A549 (cell line): ENCODE measurements at regions of chr7 and their contacts with region 1.

Region 1: DNA sequence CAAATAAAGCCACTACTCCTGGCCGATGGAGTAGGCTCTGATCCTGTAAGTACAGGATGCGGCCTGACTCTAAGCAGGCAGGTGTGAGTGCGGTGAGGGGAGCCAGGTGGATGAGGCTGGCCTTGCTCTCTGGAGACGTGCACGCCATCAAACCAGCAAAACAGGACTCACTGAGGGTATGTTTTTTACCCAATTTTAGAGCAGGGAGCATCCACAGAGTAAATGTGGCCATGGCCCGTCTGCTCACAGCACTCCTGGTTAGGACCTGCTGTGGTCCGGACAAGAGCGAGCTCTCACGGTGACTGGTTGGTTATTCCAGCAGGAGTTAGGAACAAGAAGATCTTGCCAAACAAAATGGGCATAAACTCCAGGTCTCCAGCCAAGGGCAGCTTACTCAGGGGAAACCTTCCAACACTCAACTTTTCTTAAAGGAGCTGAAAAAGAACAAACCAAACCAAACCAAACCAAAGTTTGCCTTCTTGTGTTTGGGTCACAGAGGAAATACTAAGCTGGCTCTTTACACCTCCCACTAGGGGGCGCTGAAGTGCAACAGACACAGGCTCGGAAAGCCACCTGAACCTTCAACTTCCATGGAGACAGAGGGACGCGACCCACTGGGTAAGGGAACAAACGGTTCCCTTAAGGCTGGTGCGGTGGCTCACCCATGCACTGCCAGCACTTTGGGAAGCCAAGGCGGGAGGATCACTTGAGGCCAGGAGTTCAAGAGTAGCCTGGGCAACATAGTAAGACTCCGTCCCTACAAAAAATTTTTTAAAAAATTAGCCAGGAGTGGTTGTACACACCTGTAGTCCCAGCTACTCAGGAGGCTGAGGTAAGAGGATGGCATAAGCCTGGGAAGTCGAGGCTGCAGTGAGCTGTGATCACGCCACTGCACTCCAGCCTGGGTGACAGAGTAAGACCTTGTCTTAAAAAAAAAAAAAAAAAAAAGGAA is 122.4 kb downstream of the CLEC2L start:
- DNase-seq: peak; percentile 62 to 84
- ATAC-seq: peak; percentile 83 to 84; a peak in 5 of 6 replicates
- H3K4me3 ChIP-seq: no peak overlapping the region
- H3K27ac ChIP-seq: peak overlapping the region; percentile 63 to 74; a peak in 5 of 6 replicates
- H3K4me1 ChIP-seq: peaks cover 43% of the 10 kb centered on the region
- CTCF ChIP-seq: peak; percentile 92
- EP300 ChIP-seq: no peak
- POLR2A ChIP-seq: no peak
- RAD21 ChIP-seq: peak; percentile 96

Region 2: DNA sequence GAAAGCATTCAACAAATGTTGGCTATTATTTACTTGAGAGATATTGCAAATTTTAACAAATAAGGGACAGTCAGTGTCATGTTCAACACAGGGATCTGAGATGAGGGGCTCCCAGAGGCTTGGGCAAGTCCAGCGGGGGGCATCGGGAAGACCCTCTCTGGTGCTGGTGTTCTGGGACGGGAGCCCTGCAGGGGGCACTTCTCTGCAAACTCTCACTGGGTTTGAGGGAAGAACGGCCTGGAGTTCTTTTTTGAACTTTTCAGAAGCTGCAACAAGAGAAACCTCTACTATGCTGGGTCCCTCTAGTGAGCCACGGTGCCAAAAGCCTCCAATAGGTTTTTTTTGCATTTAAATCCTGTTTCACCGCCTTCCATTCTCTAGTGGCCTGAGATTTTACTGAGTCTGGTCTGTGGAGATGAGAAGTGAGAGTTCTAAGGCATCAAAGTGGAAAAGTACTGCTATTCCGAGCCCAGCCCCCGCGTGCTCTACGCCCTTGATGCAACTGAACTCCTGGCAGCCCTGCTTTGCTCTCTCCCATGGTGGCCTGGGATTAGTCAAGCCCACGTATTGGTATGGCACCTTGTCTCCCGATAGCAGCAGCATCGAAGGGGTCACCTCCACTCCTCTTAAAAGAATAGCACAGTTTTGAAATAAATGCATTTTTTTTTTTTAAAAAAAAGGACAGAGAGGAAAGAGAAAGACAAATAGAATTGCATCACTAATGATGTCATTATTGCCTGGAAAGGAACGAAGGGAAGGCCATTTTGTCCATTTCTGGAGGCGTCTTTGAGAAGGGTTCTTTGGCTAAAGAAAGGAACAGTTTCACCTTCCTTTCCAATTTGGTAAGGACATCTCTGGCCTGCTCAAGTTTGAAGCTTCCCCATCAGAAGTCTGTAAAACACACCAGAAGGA is 78.9 kb before region 1 on chr7:
- CTCF ChIA-PET with region 1: no interaction called
- POLR2A ChIA-PET with region 1: no interaction called
- DNase-seq: no peak
- ATAC-seq: no peak
- H3K4me3 ChIP-seq: no peak overlapping the region
- H3K27ac ChIP-seq: no peak overlapping the region
- H3K4me1 ChIP-seq: no peaks in the 10 kb centered on the region
- CTCF ChIP-seq: no peak
- EP300 ChIP-seq: no peak
- POLR2A ChIP-seq: no peak
- RAD21 ChIP-seq: no peak

Region 3: DNA sequence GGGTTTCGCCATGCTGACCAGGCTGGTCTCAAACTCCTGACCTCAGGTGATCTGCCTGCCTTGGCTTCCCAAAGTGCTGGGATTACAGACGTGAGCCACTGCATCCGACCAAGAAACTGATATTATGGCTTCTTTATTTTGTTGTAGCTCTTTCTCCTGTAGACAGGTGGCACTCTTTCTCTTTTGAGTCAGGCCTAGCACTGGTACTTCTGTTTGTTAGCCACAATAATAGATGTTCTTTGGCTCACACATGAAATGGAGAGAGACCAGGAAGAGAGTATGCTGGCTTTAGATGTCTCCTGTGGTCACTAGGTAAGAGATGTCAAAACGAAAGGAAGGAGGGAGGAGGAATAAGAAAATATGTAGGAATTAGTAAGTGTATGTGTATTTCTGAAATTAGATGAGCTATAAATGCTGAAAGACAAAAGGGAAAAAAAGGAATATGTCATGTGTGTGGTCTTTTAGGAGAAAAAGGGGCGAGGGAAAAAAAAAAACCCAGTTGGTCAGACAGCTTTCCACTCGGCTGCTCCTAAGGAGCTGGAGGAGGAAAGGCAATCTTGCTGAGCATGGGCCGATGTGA is 43.6 kb before region 1 on chr7:
- CTCF ChIA-PET with region 1: interaction called, 11 read pairs
- POLR2A ChIA-PET with region 1: no interaction called
- DNase-seq: peak; percentile 45 to 56
- ATAC-seq: peak; percentile 86 to 94; a peak in 5 of 6 replicates
- H3K4me3 ChIP-seq: no peak overlapping the region
- H3K27ac ChIP-seq: no peak overlapping the region
- H3K4me1 ChIP-seq: no peaks in the 10 kb centered on the region
- CTCF ChIP-seq: peak; percentile 69
- EP300 ChIP-seq: no peak
- POLR2A ChIP-seq: no peak
- RAD21 ChIP-seq: peak; percentile 59 to 68; a peak in 4 of 5 replicates

Region 4: DNA sequence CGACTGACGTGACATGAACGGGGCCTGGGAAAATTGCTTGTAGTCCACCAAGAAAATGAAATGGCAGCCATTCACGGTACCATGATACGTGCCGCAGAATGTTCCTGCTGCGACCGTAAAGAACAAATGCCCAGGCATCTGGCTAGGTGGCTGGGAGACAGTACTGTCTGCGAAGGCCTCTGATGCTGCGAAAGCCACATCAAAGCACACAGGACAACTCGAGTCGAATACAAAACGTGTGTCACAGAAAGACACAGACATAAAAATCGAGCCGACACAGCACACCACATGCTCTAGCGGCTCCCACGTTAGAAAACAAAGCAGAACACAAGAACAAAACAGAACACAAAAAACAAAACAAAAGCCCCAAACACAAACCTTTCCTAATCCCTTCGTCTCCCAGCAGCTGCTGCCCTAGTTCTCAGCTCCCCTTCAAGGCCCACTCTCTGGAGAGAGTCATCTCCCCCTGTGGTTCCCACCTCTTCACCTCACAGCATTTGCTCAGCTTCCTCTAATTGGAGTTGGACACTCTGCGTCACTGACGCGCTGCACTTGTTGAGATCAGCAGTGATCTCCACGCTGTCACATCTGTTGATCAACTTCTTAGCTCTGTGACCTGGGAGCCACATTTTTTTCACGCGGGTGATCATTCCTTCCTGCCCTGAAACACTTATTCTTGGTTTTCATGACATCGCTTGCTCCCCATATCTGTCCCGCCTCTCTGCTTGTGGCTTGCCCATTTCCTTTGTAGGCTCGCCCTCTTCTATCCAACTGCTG is 10.1 kb before region 1 on chr7:
- CTCF ChIA-PET with region 1: interaction called, 63 read pairs
- POLR2A ChIA-PET with region 1: no interaction called
- DNase-seq: no peak
- ATAC-seq: no peak
- H3K4me3 ChIP-seq: no peak overlapping the region
- H3K27ac ChIP-seq: no peak overlapping the region
- H3K4me1 ChIP-seq: no peaks in the 10 kb centered on the region
- CTCF ChIP-seq: no peak
- EP300 ChIP-seq: no peak
- POLR2A ChIP-seq: no peak
- RAD21 ChIP-seq: no peak

Region 5: DNA sequence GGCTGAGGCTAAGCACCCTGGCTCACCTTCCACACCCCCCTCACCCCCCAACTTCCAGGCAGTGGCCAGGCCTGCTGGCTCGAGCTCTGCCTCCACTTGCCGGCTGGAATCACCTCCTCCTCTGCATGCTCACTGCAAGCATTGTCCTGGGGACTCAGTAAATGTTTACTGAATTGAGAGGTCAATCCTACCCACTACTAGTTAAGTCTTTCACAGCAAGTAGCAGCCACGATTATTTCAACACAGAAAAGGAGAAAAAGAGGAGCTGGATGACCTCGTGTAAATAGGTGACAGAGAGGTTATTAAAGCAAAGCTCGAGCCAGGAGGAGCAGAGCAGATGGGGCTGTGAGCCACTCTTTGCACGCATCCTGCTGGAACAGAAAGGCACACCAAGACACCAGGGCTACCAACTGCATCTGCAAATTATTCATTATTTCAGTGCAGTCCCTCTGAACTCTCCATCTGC is 99.9 kb after region 1 on chr7:
- CTCF ChIA-PET with region 1: interaction called, 26 read pairs
- POLR2A ChIA-PET with region 1: no interaction called
- DNase-seq: no peak
- ATAC-seq: peak in 1 of 2 experiments; percentile 32; a peak in 3 of 6 replicates
- H3K4me3 ChIP-seq: no peak overlapping the region
- H3K27ac ChIP-seq: peak overlapping the region in 1 of 2 experiments; percentile 36; a peak in 3 of 6 replicates
- H3K4me1 ChIP-seq: peaks cover 50% of the 10 kb centered on the region
- CTCF ChIP-seq: no peak
- EP300 ChIP-seq: no peak
- POLR2A ChIP-seq: no peak
- RAD21 ChIP-seq: no peak

Region 6: DNA sequence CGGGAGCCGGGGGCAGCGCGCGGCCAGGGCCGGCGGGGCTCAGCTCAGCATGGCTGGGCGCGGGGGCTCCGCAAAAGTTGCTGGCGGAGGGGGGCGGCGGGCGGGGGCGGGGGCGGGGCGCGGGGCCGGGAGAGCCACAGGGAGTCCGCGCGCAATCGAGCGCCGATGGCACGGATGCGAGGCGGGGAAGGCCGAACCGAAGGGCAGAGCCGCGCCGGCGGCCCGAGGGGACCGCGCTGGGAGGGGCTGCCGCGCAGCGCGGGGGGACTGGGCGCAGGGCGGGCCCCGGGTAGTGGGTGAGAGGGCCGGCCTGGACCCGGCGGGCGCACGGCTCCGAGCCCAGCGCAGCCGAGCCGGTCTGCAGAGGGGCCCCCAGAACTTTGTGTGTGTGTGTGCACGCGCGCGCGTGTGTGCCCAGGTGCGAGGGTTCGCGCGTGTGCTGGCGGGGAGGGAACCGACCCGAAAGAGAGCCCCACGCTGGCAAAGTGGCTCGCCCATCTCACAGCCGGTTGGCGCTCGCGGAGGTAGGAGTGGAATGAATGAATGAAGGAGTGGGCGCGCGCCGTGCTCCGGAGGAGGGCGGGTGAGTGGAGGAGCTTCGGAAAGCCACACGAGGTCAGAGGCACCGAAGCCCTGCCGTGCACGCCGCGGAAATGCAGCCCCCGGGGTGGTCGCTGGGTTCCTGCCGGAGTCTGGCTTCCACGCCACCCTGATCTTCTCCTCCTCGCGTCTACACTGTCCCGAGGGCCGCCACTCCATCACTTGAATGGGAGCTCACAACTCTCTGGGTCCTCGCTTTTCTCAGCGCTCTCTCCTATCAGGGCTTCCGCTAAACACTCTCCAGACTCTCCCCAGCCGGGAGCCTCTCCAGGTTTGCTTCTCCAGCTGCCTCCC is 132.3 kb after region 1 on chr7 and contains the start of gene HIPK2:
- CTCF ChIA-PET with region 1: interaction called, 36 read pairs
- POLR2A ChIA-PET with region 1: interaction called, 4 read pairs
- DNase-seq: peak; percentile 65 to 76
- ATAC-seq: peak; percentile 72 to 76
- H3K4me3 ChIP-seq: peak within 1 kb of the TSS; percentile 99
- H3K27ac ChIP-seq: peak within 1 kb of the TSS; percentile 97 to 100
- H3K4me1 ChIP-seq: peaks cover 31% of the 10 kb centered on the region
- CTCF ChIP-seq: no peak
- EP300 ChIP-seq: no peak
- POLR2A ChIP-seq: peak; percentile 24
- RAD21 ChIP-seq: no peak; a peak in 2 of 5 replicates
- polyA plus RNA-seq, gene HIPK2: 12.1 and 16.3 TPM in 2 replicates

Region 7: DNA sequence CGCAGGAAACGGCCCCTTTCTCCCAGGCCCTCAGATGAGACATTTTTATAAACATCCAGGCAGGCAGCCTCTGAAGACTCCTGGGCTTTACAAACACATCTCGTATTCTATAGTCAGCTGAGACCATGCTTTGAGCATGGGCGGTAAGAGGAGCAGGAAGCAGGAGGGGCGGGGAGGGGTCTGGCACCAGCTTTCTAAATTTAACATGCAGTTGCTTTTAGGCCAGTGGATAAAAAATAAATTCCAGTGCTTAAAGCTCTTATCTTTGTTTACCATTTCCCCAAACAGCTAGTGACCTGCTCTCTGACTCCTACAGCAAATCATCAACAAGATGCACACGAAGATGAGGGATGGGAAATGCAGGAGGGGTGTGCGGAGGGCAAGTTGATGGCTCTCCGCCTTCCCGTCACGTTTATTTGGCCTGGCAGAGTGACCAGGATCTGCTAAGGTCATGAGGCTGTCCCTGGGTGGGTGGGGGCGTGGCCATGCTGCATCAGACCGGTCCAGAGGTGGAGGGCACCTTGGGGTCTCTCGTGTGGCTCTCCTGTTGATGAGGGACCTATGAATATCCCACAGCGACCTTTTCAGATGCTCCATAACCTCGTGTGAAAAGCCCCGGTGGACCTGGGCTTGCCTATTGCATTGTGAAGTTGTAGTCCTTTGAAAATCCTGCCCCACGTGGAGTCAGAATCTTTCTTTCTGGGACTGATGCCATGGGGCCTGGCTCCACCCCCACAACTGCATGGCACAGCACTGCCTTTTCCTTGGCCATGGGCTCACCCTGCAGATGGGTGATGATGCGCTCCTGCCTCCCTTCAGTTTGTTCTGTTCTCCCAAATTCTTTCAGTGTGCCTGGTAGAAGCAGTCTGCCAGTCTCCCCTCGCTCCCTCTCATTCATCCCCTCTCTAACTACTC is 349.4 kb after region 1 on chr7:
- CTCF ChIA-PET with region 1: interaction called, 311 read pairs
- POLR2A ChIA-PET with region 1: no interaction called
- DNase-seq: no peak
- ATAC-seq: peak; percentile 49 to 65; a peak in 3 of 6 replicates
- H3K4me3 ChIP-seq: no peak overlapping the region
- H3K27ac ChIP-seq: peak overlapping the region; percentile 30 to 43; a peak in 2 of 6 replicates
- H3K4me1 ChIP-seq: peaks cover 17% of the 10 kb centered on the region
- CTCF ChIP-seq: no peak
- EP300 ChIP-seq: no peak
- POLR2A ChIP-seq: no peak
- RAD21 ChIP-seq: 0 out of 5 replicates have a peak, but pooled peaks of 1 of the 2 experiments have one; percentile 14